ENCODE measurements at regions of chr10 and their contacts with region 1.

Region 1: GRCh38 chr10:11986593-11987216 is 55.9 kb downstream of the UPF2 start:
- DNase-seq: peak; percentile 73
- ATAC-seq: peak; percentile 89
- H3K4me3 ChIP-seq: no peak overlapping the region
- H3K27ac ChIP-seq: no peak overlapping the region
- H3K4me1 ChIP-seq: no peaks in the 10 kb centered on the region
- H3K27me3 ChIP-seq: no peaks in the 10 kb centered on the region
- CTCF ChIP-seq: peak; percentile 85

Region 2: DNA sequence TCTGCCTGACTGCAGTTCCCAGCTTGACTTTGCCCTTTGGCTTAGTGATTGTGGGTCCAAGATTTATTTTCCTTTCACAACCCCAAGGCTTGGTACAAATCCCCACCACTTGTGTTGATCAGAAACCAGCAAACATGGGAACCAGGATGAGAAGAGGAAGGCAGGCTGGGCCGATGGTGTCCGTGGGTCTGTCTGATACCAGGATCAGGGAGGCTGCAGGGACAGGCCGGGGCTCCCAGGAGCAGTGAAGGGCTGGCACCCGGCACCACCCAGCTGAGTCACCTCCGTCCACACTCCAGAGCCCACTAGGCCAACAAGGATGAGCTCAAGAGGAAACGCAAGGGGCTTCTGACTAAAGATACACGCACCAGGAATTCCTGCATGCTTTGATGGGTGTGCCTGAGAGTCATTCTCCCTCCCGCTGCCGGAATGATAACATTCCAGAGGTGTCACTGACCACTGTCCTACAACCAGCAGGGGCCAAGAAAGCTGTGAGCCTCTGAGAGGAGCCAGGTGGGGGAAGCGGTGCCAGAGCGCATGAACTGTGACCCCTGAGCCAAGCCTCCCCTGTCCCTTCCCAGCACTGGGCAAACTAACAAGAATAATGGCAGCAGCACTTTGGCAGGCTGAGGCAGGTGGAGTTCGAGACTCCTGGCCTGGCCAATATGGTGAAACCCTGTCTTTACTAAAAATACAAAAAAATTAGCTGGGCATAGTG is 192.8 kb before region 1 on chr10:
- intact Hi-C with region 1: loop called (anchors 10 kb)
- DNase-seq: no peak
- ATAC-seq: peak; percentile 59
- H3K4me3 ChIP-seq: no peak overlapping the region
- H3K27ac ChIP-seq: no peak overlapping the region
- H3K4me1 ChIP-seq: no peaks in the 10 kb centered on the region
- H3K27me3 ChIP-seq: no peaks in the 10 kb centered on the region
- CTCF ChIP-seq: no peak

Measured in upper lobe of right lung (tissue), 1 donor.